CD8-positive, alpha-beta T cell (primary cell): ENCODE measurements at regions of chr2 and their contacts with region 1.

Region 1: DNA sequence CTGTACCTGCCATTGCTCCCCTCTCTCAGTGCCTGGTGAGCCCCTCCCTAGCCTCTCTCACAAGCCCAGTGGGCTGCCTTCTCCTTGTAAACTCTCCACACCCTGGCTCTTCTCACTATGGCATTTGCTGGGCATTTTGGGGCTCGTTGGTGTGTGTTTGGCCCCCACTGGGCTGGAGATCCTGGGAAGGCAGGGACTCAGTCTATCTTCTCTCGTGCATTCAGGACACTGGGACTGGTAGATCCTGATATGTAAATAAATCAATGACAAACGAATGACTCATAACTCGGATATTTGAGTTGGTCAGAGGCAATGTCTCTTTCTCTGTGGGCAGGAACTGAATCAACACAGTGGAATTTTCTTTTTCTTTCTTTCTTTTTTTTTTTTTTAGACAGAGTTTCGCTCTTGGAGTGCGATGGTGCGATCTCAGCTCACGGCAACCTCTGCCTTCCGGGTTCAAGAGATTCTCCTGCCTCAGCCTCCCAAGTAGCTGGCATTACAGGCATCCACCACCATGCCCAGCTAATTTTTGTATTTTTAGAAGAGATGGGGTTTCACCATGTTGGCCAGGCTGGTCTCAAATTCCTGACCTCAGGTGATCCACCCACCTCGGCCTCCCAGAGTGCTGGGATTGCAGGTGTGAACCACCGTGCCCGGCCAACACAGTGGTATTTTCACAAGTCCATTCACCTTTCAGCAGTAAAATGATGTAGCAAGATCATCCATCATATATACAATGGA is 144.6 kb upstream of the SPRED2 start:
- DNase-seq: no peak
- ATAC-seq: no peak
- H3K4me3 ChIP-seq: no peak overlapping the region
- H3K4me3 Mint-ChIP-seq: no peak overlapping the region
- H3K27ac ChIP-seq: no peak overlapping the region
- H3K27ac Mint-ChIP-seq: no peak overlapping the region
- H3K4me1 ChIP-seq: no peaks in the 10 kb centered on the region
- H3K4me1 Mint-ChIP-seq: peaks cover 2% of the 10 kb centered on the region
- H3K27me3 ChIP-seq: no peaks in the 10 kb centered on the region
- H3K27me3 Mint-ChIP-seq: peaks cover 11% of the 10 kb centered on the region
- CTCF ChIP-seq: no peak

Region 2: GRCh38 chr2:65064728-65065552 is 512.1 kb before region 1 on chr2:
- CTCF ChIA-PET with region 1: no interaction called
- POLR2A ChIA-PET with region 1: no interaction called
- intact Hi-C with region 1: loop called in 1 of 2 experiments (anchors 5 kb)
- DNase-seq: peak in 7 of 9 experiments; percentile 15 to 81 (median 43)
- ATAC-seq: peak; percentile 96
- H3K4me3 ChIP-seq: no peak overlapping the region
- H3K4me3 Mint-ChIP-seq: no peak overlapping the region
- H3K27ac ChIP-seq: no peak overlapping the region
- H3K27ac Mint-ChIP-seq: peak overlapping the region; percentile 41
- H3K4me1 ChIP-seq: peaks cover 42% of the 10 kb centered on the region
- H3K4me1 Mint-ChIP-seq: peaks cover 50% of the 10 kb centered on the region
- H3K27me3 ChIP-seq: no peaks in the 10 kb centered on the region
- H3K27me3 Mint-ChIP-seq: no peaks in the 10 kb centered on the region
- CTCF ChIP-seq: peak; percentile 78

Region 3: GRCh38 chr2:65186872-65187851 is 389.9 kb before region 1 on chr2:
- CTCF ChIA-PET with region 1: no interaction called
- POLR2A ChIA-PET with region 1: no interaction called
- intact Hi-C with region 1: loop called in 1 of 2 experiments (anchors 1 kb)
- DNase-seq: peak; percentile 35 to 74 (median 63)
- ATAC-seq: peak; percentile 88
- H3K4me3 ChIP-seq: no peak overlapping the region
- H3K4me3 Mint-ChIP-seq: no peak overlapping the region
- H3K27ac ChIP-seq: no peak overlapping the region
- H3K27ac Mint-ChIP-seq: no peak overlapping the region
- H3K4me1 ChIP-seq: peaks cover 6% of the 10 kb centered on the region
- H3K4me1 Mint-ChIP-seq: peaks cover 9% of the 10 kb centered on the region
- H3K27me3 ChIP-seq: no peaks in the 10 kb centered on the region
- H3K27me3 Mint-ChIP-seq: peaks cover 10% of the 10 kb centered on the region
- CTCF ChIP-seq: peak; percentile 60

Region 4: GRCh38 chr2:65264821-65265670 is 312.0 kb before region 1 on chr2:
- CTCF ChIA-PET with region 1: interaction called, 6 read pairs
- POLR2A ChIA-PET with region 1: no interaction called
- intact Hi-C with region 1: loop called (anchors 1 kb)
- DNase-seq: peak in 2 of 9 experiments; percentile 55 to 68
- ATAC-seq: no peak
- H3K4me3 ChIP-seq: no peak overlapping the region
- H3K4me3 Mint-ChIP-seq: no peak overlapping the region
- H3K27ac ChIP-seq: no peak overlapping the region
- H3K27ac Mint-ChIP-seq: peak overlapping the region; percentile 66
- H3K4me1 ChIP-seq: no peaks in the 10 kb centered on the region
- H3K4me1 Mint-ChIP-seq: peaks cover 11% of the 10 kb centered on the region
- H3K27me3 ChIP-seq: no peaks in the 10 kb centered on the region
- H3K27me3 Mint-ChIP-seq: no peaks in the 10 kb centered on the region
- CTCF ChIP-seq: peak; percentile 75

Region 5: DNA sequence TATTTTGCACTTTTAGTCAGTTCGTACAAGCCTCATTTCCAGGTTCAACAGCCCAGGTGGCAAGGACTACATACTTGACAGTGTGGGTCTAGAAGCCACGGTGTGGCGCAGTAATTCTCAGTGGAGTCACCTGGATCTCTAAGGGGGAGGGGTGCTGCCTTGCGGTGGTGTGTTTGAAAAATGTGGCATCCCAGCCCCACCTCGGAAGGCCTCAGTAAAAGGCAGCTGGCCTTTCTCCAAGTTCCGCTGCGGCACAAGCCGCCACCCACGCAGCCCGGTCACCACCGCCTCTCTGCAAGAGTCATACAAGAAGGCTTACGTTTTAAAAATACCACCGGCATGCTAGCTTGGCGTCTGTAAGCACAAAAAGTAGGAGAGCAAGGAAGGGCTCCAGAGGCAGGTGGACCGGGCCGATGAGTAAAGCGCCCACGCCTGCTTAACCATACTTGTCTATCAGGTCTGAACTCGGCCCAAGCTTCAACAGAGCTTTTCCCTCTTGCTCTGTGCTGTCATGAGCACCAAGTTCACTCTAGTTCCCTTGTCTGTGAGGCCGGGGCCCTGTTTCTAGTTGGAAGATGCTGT is 194.2 kb before region 1 on chr2:
- CTCF ChIA-PET with region 1: no interaction called
- POLR2A ChIA-PET with region 1: no interaction called
- intact Hi-C with region 1: loop called in 1 of 2 experiments (anchors 1 kb)
- DNase-seq: peak; percentile 43 to 86 (median 77)
- ATAC-seq: peak; percentile 95
- H3K4me3 ChIP-seq: no peak overlapping the region
- H3K4me3 Mint-ChIP-seq: peak overlapping the region; percentile 61
- H3K27ac ChIP-seq: no peak overlapping the region
- H3K27ac Mint-ChIP-seq: peak overlapping the region; percentile 67
- H3K4me1 ChIP-seq: peaks cover 21% of the 10 kb centered on the region
- H3K4me1 Mint-ChIP-seq: peaks cover 29% of the 10 kb centered on the region
- H3K27me3 ChIP-seq: no peaks in the 10 kb centered on the region
- H3K27me3 Mint-ChIP-seq: peaks cover 15% of the 10 kb centered on the region
- CTCF ChIP-seq: peak; percentile 21

Region 6: DNA sequence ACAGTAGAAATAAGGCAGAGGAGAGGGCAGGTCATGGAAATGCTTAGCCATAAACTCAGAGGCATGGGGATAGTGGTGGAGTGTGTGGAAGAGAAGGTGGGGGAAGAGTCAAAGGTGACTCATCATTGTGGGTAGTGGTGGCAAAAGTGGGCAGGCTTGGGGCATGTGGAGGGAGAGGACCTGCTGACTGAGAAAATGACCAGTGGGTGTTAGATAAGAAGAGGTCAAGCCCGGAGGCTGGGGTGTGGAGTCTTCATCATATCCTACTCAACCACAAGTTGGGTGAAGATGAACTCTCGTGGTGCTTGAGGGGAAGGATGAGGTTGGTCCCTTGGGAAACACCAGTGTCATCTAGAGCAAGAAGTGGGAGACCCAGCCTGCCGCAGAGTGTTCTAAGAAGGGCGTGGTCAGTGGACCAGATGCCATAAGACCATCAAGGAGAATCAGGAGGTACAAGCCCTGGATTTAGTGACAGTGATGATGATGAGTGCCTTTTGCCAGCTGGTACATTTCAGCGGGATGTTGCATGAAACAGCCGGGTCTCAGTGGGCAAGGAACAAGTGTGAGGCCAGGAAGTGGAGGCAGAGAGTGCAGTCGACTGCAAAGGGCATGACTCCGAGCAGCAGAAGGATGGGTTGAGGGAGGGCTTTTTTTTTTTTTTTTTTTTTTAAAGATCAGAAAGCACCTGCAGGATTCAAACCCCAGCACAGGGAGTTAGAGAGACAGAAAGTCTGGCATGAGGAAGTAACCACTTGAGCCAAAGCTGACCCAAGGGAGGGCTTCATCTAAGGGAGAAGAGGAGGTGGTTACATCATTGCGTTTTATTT is 22.1 kb before region 1 on chr2:
- CTCF ChIA-PET with region 1: interaction called, 5 read pairs
- POLR2A ChIA-PET with region 1: no interaction called
- intact Hi-C with region 1: loop called in 1 of 2 experiments (anchors 1 kb)
- DNase-seq: no peak
- ATAC-seq: no peak
- H3K4me3 ChIP-seq: no peak overlapping the region
- H3K4me3 Mint-ChIP-seq: no peak overlapping the region
- H3K27ac ChIP-seq: no peak overlapping the region
- H3K27ac Mint-ChIP-seq: no peak overlapping the region
- H3K4me1 ChIP-seq: peaks cover 3% of the 10 kb centered on the region
- H3K4me1 Mint-ChIP-seq: peaks cover 4% of the 10 kb centered on the region
- H3K27me3 ChIP-seq: no peaks in the 10 kb centered on the region
- H3K27me3 Mint-ChIP-seq: peaks cover 10% of the 10 kb centered on the region
- CTCF ChIP-seq: no peak